ENCODE measurements at regions of chr11 and their contacts with region 1.

Region 1: GRCh38 chr11:86218125-86219084 is 26.1 kb upstream of the EED start:
- DNase-seq: peak; percentile 52 to 77
- ATAC-seq: peak; percentile 83 to 96 (median 92)
- H3K4me3 ChIP-seq: peak overlapping the region in 9 of 10 donors; percentile 10 to 52 (median 40)
- H3K27ac ChIP-seq: peak overlapping the region in 3 of 10 donors; percentile 11 to 26 (median 22)
- H3K4me1 ChIP-seq: peaks cover 0 to 19% (median 7%) of the 10 kb centered on the region in 9 donors
- H3K27me3 ChIP-seq: no peaks in the 10 kb centered on the region
- CTCF ChIP-seq: peak; percentile 75 to 96 (median 91)

Region 2: GRCh38 chr11:85867751-85868150 is 350.7 kb before region 1 on chr11:
- intact Hi-C with region 1: loop called in 1 of 10 experiments (anchors 10 kb)
- DNase-seq: no peak
- ATAC-seq: no peak
- H3K4me3 ChIP-seq: no peak overlapping the region
- H3K27ac ChIP-seq: no peak overlapping the region
- H3K4me1 ChIP-seq: no peaks in the 10 kb centered on the region
- H3K27me3 ChIP-seq: no peaks in the 10 kb centered on the region
- CTCF ChIP-seq: no peak

Measured in heart right ventricle (tissue), 16 donors.